ENCODE measurements at regions of chr3 and their contacts with region 1.

Region 1: GRCh38 chr3:48151058-48151806 is 37.0 kb downstream of the CDC25A start:
- DNase-seq: peak; percentile 43
- ATAC-seq: peak; percentile 100
- H3K4me3 ChIP-seq: no peak overlapping the region
- H3K27ac ChIP-seq: no peak overlapping the region
- H3K4me1 ChIP-seq: no peaks in the 10 kb centered on the region; the same call in 1 of the 2 replicates
- H3K27me3 ChIP-seq: no peaks in the 10 kb centered on the region
- CTCF ChIP-seq: peak; percentile 85 to 91 (median 90)
- EP300 ChIP-seq: no peak
- POLR2A ChIP-seq: no peak
- RAD21 ChIP-seq: peak; percentile 96

Region 2: DNA sequence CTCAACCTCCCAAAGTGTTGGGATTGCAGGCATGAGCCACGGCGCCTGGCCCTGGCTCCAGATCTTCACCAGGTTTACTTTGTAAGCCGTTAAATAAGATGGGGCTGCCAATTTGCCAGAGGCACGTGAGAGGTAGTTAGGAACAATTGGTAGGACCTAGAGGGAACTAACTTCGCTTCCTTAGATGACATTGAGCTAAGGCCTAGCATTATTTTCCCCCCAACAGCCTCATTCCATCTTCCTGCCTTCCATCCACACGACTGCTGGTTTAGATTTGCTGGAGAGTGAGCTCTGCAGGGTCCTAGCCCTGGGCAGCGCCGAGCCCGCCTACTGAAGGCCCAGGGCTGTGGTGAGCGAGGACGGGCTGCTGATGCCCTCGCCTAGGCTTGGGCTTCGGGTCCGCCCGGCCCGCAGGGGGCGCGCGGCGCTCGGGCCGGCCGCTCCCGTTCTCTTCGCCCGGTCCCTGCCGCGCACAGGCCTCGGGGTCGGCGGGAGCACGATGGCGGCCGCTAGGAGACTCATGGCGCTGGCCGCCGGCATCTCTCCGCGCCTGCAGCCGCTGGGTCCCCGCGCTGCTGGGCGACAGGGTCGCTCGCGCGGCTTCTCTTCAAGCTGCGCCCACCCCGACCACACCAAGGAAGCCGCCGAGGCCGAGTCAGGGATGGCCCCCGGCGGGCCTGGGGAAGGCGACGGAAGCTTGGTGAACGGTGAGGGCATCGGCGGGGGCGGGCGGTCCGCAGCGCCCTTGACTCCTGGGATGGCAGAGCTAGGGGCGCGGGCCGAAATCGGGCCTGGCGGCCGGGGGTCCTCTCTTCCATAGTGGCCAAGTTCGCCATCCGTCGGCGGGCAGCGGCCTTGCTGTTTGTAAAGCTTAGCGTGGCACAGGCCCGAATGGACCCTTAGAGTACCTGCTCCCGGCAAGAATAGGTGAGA is 326.4 kb before region 1 on chr3:
- CTCF ChIA-PET with region 1: interaction called, 30 read pairs
- POLR2A ChIA-PET with region 1: interaction called, 4 read pairs
- RAD21 ChIA-PET with region 1: interaction called, 17 read pairs
- SMC1A ChIA-PET with region 1: interaction called, 12 read pairs
- in situ Hi-C with region 1: no loop called
- intact Hi-C with region 1: no loop called
- DNase-seq: peak; percentile 25
- ATAC-seq: peak; percentile 100
- H3K4me3 ChIP-seq: peak overlapping the region; percentile 98
- H3K27ac ChIP-seq: peak overlapping the region; percentile 85
- H3K4me1 ChIP-seq: peaks cover 6% of the 10 kb centered on the region
- H3K27me3 ChIP-seq: no peaks in the 10 kb centered on the region
- CTCF ChIP-seq: peak; percentile 70 to 92 (median 86); a peak in 5 of 6 replicates
- EP300 ChIP-seq: no peak
- POLR2A ChIP-seq: peak; percentile 95
- RAD21 ChIP-seq: peak; percentile 38; the same call in 1 of the 2 replicates

Region 3: GRCh38 chr3:47890828-47891612 is 260.2 kb before region 1 on chr3:
- CTCF ChIA-PET with region 1: interaction called, 5 read pairs
- POLR2A ChIA-PET with region 1: no interaction called
- RAD21 ChIA-PET with region 1: no interaction called
- SMC1A ChIA-PET with region 1: interaction called, 3 read pairs
- in situ Hi-C with region 1: no loop called
- intact Hi-C with region 1: loop called (anchors 10 kb)
- DNase-seq: no peak
- ATAC-seq: no peak
- H3K4me3 ChIP-seq: no peak overlapping the region
- H3K27ac ChIP-seq: no peak overlapping the region
- H3K4me1 ChIP-seq: 0 out of 2 replicates have a peak, but pooled peaks cover 3% of the 10 kb centered on the region
- H3K27me3 ChIP-seq: no peaks in the 10 kb centered on the region
- CTCF ChIP-seq: no peak
- EP300 ChIP-seq: no peak
- POLR2A ChIP-seq: no peak
- RAD21 ChIP-seq: no peak

Region 4: DNA sequence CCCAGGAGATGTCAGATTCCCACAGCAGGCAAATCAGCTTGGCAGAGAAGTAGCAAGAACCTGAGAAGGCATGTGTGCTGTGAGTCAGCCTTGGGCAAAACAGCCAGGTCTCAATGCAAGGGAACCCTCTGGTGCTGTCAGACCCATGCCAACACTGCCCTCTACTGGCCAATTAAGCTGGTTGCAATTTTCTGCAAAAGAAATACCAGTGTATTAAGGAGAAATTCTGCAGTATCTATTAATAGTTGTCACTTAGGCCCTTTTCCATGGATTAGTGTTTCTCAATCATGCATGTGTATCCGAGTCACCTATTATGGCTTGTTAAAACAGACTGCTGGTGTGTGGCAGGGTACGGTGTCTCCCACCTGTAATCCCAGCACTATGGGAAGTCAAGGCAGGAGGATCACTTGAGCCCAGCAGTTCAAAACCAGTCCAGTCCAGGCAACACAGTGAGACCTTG is 161.2 kb before region 1 on chr3:
- CTCF ChIA-PET with region 1: interaction called, 29 read pairs
- POLR2A ChIA-PET with region 1: no interaction called
- RAD21 ChIA-PET with region 1: interaction called, 17 read pairs
- SMC1A ChIA-PET with region 1: interaction called, 21 read pairs
- in situ Hi-C with region 1: loop called (anchors 5 kb)
- intact Hi-C with region 1: loop called (anchors 2 kb)
- DNase-seq: peak; percentile 37
- ATAC-seq: peak; percentile 98
- H3K4me3 ChIP-seq: no peak overlapping the region
- H3K27ac ChIP-seq: no peak overlapping the region
- H3K4me1 ChIP-seq: no peaks in the 10 kb centered on the region
- H3K27me3 ChIP-seq: no peaks in the 10 kb centered on the region
- CTCF ChIP-seq: peak; percentile 81 to 91 (median 90); a peak in 5 of 6 replicates
- EP300 ChIP-seq: no peak
- POLR2A ChIP-seq: no peak
- RAD21 ChIP-seq: peak; percentile 97

Region 5: DNA sequence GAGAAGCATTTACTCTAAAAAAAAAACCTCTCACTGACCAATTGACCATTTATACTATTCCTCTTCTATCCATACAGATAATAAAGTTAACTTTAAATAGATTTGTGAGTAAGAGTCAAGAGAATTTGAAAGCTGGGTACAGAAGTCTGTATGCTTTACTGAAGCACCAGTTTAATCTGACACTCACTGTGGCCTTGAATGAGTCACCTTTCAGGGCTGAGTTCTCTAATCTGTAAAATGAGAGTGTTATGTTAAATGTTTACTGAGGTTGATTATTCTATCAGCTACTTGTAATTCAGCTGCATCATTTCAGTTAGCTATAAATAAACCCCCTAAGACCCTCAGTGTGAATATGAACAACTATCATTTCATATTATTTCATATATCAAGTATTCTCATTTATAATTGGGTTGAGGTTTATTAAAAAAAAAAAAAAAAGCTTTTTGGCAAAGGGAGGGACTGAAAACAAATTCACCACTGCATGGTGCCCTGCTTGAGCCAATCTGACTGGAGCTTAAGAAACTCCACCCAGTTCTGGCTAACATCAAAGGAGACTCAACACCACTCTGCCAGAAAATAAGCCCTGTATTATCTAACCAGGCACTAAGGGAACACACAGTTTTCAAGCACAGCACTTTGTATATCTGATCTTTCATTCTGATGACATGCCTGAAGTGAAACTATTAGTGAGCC is 137.8 kb before region 1 on chr3:
- CTCF ChIA-PET with region 1: interaction called, 10 read pairs
- POLR2A ChIA-PET with region 1: no interaction called
- RAD21 ChIA-PET with region 1: interaction called, 3 read pairs
- SMC1A ChIA-PET with region 1: interaction called, 4 read pairs
- in situ Hi-C with region 1: no loop called
- intact Hi-C with region 1: no loop called
- DNase-seq: no peak
- ATAC-seq: peak; percentile 80
- H3K4me3 ChIP-seq: no peak overlapping the region
- H3K27ac ChIP-seq: no peak overlapping the region
- H3K4me1 ChIP-seq: no peaks in the 10 kb centered on the region
- H3K27me3 ChIP-seq: no peaks in the 10 kb centered on the region
- CTCF ChIP-seq: no peak
- EP300 ChIP-seq: no peak
- POLR2A ChIP-seq: no peak
- RAD21 ChIP-seq: no peak

Region 6: GRCh38 chr3:48088749-48089466 is 62.3 kb before region 1 on chr3:
- CTCF ChIA-PET with region 1: interaction called, 19 read pairs
- POLR2A ChIA-PET with region 1: interaction called, 3 read pairs
- RAD21 ChIA-PET with region 1: interaction called, 11 read pairs
- SMC1A ChIA-PET with region 1: interaction called, 6 read pairs
- in situ Hi-C with region 1: no loop called
- intact Hi-C with region 1: loop called (anchors 5 kb)
- DNase-seq: peak; percentile 81
- ATAC-seq: peak; percentile 96
- H3K4me3 ChIP-seq: peak overlapping the region; percentile 87
- H3K27ac ChIP-seq: peak overlapping the region; percentile 79
- H3K4me1 ChIP-seq: peaks cover 6% of the 10 kb centered on the region; the same call in 1 of the 2 replicates
- H3K27me3 ChIP-seq: no peaks in the 10 kb centered on the region
- CTCF ChIP-seq: no peak
- EP300 ChIP-seq: no peak
- POLR2A ChIP-seq: peak; percentile 96
- RAD21 ChIP-seq: no peak

Measured in GM12878 (cell line).